Caco-2 (cell line): ENCODE measurements at regions of chr1 and their contacts with region 1.

Region 1: GRCh38 chr1:54081306-54082270 is 28.2 kb downstream of the TCEANC2 start:
- DNase-seq: peak; percentile 75
- H3K4me3 ChIP-seq: no peak overlapping the region
- H3K4me3 Mint-ChIP-seq: no peak overlapping the region
- H3K27ac Mint-ChIP-seq: no peak overlapping the region
- H3K4me1 ChIP-seq: no peaks in the 10 kb centered on the region
- H3K4me1 Mint-ChIP-seq: peaks cover 6% of the 10 kb centered on the region
- H3K27me3 ChIP-seq: no peaks in the 10 kb centered on the region
- H3K27me3 Mint-ChIP-seq: no peaks in the 10 kb centered on the region
- CTCF ChIP-seq: peak; percentile 52 to 66

Region 2: DNA sequence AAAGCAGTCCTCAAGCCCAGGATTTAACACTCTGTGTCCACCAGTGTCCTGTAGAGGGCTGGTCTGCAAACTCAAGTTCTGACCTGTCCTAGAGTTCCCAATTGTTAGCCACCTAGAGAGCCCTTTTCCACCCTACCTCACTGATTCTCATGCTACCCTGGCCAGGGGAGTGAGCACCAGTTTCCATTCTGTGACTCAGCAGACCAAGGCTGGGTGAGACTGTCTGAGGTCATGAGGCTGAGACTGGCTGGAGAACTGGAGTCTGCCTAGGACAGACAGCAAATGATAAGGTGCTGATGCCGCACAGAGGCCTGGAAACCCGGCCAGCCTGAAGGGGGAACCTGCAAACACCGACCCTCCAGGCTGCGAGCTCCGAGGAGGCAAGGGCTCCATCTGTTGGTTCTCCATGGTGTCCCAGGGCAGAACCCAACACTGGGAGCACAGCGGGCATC is 356.3 kb before region 1 on chr1:
- CTCF ChIA-PET with region 1: no interaction called
- POLR2A ChIA-PET with region 1: no interaction called
- intact Hi-C with region 1: no loop called
- DNase-seq: peak; percentile 29 to 37
- H3K4me3 ChIP-seq: no peak overlapping the region
- H3K4me3 Mint-ChIP-seq: no peak overlapping the region
- H3K27ac Mint-ChIP-seq: no peak overlapping the region
- H3K4me1 ChIP-seq: no peaks in the 10 kb centered on the region
- H3K4me1 Mint-ChIP-seq: no peaks in the 10 kb centered on the region
- H3K27me3 ChIP-seq: no peaks in the 10 kb centered on the region
- H3K27me3 Mint-ChIP-seq: no peaks in the 10 kb centered on the region
- CTCF ChIP-seq: peak in 1 of 2 experiments; percentile 18

Region 3: GRCh38 chr1:53837924-53838652 is 243.5 kb before region 1 on chr1 and contains the start of gene NDC1:
- CTCF ChIA-PET with region 1: no interaction called
- POLR2A ChIA-PET with region 1: no interaction called
- intact Hi-C with region 1: no loop called
- DNase-seq: peak; percentile 91 to 94
- H3K4me3 ChIP-seq: peak within 1 kb of the TSS; percentile 80
- H3K4me3 Mint-ChIP-seq: peak within 1 kb of the TSS; percentile 100
- H3K27ac Mint-ChIP-seq: peak within 1 kb of the TSS; percentile 94
- H3K4me1 ChIP-seq: no peaks in the 10 kb centered on the region
- H3K4me1 Mint-ChIP-seq: no peaks in the 10 kb centered on the region
- H3K27me3 ChIP-seq: no peaks in the 10 kb centered on the region
- H3K27me3 Mint-ChIP-seq: no peaks in the 10 kb centered on the region
- CTCF ChIP-seq: peak in 1 of 2 experiments; percentile 18
- total RNA-seq, gene NDC1: 28.8 and 29.6 TPM in 2 replicates

Region 4: GRCh38 chr1:53860967-53861411 is 220.6 kb before region 1 on chr1:
- CTCF ChIA-PET with region 1: interaction called, 15 read pairs
- POLR2A ChIA-PET with region 1: no interaction called
- intact Hi-C with region 1: loop called (anchors 2 kb)
- DNase-seq: peak; percentile 41 to 55
- H3K4me3 ChIP-seq: no peak overlapping the region
- H3K4me3 Mint-ChIP-seq: peak overlapping the region; percentile 38
- H3K27ac Mint-ChIP-seq: no peak overlapping the region
- H3K4me1 ChIP-seq: no peaks in the 10 kb centered on the region
- H3K4me1 Mint-ChIP-seq: no peaks in the 10 kb centered on the region
- H3K27me3 ChIP-seq: no peaks in the 10 kb centered on the region
- H3K27me3 Mint-ChIP-seq: no peaks in the 10 kb centered on the region
- CTCF ChIP-seq: peak; percentile 60 to 71